Posterior vena cava (tissue), 2 donors: ENCODE measurements at regions of chr9 and their contacts with region 1.

Region 1: GRCh38 chr9:3863111-3863528 is 337.3 kb upstream of the RFX3 start:
- DNase-seq: no peak

Region 2: DNA sequence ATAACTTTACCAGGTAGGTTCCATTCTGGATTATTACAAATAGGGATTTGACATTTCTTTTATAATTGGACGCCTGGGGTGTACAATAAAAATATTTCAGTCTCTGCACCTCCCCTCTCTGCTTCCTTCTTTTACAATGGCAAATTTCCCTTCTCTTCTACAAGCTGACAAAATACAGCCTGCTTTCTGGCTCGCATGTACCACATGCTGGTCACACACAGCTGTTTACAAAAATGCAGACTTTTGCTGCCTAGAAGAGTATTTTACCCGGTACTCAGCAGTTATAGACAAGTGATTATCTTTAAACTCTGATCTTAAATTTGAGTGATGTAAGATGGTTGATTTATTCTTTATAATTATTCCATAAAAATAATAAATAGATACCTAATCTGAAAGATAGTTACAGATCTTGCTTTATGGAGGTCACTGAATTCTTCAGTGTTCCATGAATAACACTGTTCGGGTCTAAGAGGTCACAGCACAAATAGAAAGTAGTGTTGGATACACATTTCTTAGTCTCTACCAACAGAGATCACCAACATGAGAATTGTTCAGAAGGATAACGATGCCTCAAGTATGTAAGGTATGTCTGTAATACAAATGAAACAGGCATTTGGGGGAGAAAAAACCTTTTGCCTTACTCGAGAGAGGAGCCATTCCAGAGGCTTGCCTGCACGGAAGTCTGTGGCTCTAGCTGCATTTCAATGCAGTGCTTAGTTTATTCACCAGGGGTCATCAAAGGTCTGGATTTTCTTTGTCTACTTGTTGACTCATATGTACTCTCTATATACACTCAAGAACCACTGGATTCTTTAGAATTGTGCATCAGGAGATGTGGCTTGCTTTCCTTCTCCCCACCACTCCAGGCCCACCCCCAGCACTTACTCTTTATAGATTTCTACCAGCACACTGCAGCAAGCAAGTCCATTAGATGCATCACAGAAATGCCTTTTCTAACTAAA is 130.8 kb before region 1 on chr9:
- intact Hi-C with region 1: no loop called
- DNase-seq: no peak

Region 3: DNA sequence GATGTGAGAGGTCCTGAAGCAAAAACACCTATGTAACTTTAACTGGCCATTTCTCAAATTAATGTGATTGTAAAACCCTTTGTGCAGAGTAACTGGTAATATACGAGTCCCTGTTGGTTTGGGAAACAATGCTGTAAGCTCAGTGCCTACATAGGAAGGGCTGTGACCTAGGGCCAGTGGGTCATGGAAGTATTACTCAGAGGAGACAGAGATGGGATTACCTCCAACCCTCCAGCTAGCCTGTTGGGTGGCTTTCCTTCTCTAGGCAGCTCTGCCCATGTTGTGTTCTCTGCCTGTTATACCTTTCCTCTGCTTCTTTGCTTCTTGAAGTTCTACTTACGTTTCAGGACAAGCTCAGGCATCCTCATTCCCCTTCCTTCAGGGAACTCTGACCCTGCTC is 42.5 kb before region 1 on chr9:
- intact Hi-C with region 1: no loop called
- DNase-seq: no peak

Region 4: GRCh38 chr9:3906432-3907213 is 43.5 kb after region 1 on chr9:
- intact Hi-C with region 1: loop called in 1 of 2 experiments (anchors 1 kb)
- DNase-seq: no peak

Region 5: DNA sequence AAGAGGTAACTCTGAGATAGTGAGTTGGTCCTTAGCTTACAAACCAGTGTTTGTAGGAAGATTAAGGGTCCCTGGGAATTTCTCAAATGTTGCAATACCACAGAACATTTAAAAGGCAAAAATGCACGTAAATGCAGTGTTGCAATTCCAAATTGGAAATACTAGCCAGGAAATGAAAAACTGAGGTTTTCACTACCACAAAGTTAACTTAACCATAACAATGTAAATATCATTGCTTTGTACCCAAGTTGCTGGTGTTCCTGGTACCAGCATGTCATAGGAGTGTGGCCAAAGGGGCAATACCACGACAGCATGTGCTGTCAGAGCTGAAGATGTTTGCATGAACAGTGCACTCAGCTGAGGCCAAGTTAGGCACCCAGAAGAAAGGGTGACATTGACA is 53.9 kb after region 1 on chr9:
- intact Hi-C with region 1: no loop called
- DNase-seq: no peak

Region 6: DNA sequence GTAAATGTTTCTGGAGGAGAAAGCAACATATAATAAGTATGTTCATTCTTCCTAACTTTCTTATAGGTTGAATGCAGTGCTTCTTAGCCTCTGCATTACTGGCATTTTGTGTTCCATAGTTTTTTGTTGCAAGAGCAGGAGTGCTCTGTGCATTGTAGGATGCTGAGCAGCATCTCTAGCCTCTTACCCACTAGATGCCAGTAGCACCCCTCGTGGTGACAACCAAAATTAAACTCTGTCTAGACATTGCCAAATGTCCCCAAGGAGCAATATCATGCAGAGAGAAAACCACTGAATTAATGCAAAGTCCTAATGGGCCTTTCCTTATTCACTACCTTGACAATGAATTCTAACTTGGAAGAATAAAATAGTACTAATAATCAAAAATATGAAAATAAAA is 289.8 kb after region 1 on chr9:
- intact Hi-C with region 1: no loop called
- DNase-seq: no peak